Dorsolateral prefrontal cortex (tissue), 120 donors: ENCODE measurements at regions of chr3 and their contacts with region 1.

Region 1: DNA sequence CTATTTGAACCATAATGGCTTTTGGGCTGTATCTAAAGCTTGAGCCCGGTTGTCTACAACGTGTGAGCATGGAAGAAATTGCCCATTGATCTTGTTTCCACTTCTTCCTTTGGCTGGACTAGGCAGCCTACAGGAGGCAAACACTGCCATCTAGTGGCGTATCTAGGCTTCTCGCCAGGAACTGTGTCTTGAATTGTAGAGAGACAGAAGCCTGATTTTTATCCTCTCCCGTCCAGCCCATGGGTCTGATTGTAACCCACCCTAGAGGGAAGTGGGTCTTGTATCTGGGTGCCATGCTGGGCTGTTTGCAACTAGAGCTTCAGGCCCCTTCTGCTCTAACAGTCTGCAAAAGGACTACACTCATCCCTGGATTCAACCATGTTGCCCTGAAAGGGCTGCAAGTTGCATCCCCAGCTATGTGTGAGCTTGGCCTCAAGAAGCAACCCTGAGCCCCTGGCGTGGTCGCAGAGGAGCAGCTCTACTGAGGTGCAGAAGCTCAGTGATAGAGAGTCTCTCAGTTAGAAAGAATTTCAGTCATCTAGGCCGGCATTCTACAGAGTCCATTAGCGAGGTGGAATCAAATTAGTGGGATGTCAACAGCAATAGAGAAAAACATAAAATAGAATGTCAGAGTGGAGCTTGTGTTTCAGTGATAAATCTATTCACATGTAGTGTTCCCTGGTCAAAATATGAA is 170.2 kb upstream of the UMPS start:
- DNase-seq: peak; percentile 53 to 90 (median 79)
- H3K4me3 ChIP-seq: no peak overlapping the region
- H3K27ac ChIP-seq: peak overlapping the region in 51 of 59 donors; percentile 1 to 92 (median 70)
- H3K27me3 ChIP-seq: no peaks in the 10 kb centered on the region
- CTCF ChIP-seq: peak; percentile 38 to 97 (median 90)

Region 2: GRCh38 chr3:124026516-124026915 is 533.5 kb before region 1 on chr3:
- intact Hi-C with region 1: loop called in 1 of 2 experiments (anchors 10 kb)
- DNase-seq: no peak
- H3K4me3 ChIP-seq: no peak overlapping the region
- H3K27ac ChIP-seq: no peak overlapping the region
- H3K27me3 ChIP-seq: no peaks in the 10 kb centered on the region
- CTCF ChIP-seq: no peak

Region 3: DNA sequence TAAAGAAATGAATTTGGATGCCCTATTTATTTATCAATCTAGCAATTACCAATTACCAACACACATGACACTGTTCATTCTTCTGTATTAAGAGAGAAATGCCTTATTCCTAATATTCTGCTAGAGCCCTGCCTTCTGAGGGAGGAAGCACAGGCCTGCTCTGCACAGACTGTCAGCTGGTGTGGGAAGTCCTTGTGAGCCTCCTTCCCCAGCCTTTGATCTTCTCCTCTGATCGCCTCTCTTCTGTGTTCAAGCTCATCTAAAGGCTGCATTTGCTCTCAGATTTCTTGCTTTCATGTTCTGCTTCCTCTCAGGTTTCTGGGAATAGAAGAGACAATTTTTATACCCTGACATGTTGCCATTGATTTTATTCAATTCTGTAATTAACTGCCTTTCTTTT is 120.4 kb before region 1 on chr3:
- intact Hi-C with region 1: no loop called
- DNase-seq: no peak
- H3K4me3 ChIP-seq: no peak overlapping the region
- H3K27ac ChIP-seq: peak overlapping the region in 38 of 59 donors; percentile 3 to 86 (median 41)
- H3K27me3 ChIP-seq: no peaks in the 10 kb centered on the region
- CTCF ChIP-seq: no peak

Region 4: GRCh38 chr3:124529826-124530571 is 30.0 kb before region 1 on chr3:
- intact Hi-C with region 1: no loop called
- DNase-seq: peak in 4 of 10 donors; percentile 39 to 75 (median 60)
- H3K4me3 ChIP-seq: peak overlapping the region in 1 of 59 donors; percentile 8
- H3K27ac ChIP-seq: peak overlapping the region in 33 of 59 donors; percentile 1 to 77 (median 35)
- H3K27me3 ChIP-seq: no peaks in the 10 kb centered on the region
- CTCF ChIP-seq: peak in 2 of 56 donors; percentile 32 to 37

Region 5: DNA sequence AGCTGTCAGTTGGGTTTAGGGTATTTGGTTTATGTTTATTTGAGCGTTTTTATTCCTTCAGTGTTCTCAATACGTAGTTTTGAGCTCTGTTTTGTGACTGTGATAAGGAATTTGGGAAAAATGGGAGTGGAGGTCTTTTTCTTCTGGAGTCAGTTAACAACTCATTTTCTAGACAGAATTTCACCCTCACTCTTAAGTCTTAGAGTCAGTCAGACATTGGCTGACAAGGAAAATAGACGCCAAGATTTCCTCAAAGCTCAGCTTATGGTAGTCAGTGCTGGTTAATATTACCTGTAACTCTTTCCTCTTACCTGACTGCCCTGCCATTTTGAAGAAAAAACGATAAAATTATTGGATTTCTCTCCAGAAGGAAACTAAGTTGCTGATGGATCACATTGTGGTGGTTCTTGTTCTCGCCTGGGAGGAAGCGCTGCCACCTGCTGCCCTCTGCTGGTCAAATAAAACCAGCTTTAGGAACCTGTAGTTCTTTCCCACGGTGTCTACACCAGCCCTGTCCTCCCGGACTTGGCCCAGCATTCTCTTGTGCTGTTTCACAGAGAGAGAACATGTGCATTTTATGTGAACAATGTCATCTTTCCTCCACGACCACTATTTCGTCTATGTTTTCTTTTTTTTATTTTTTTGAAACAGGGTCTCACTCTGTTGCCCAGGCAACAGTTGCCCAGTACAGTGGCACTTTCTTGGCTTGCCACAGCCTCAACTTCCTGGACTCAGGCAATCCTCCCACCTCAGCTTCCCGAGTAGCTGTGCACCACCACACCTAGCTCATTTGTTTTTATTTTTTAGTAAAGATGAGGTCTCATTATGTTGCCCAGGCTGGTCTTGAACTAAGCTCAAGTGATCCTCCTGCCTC is 128.8 kb after region 1 on chr3:
- intact Hi-C with region 1: loop called (anchors 2 kb)
- DNase-seq: peak; percentile 41 to 78 (median 66)
- H3K4me3 ChIP-seq: no peak overlapping the region
- H3K27ac ChIP-seq: no peak overlapping the region
- H3K27me3 ChIP-seq: no peaks in the 10 kb centered on the region
- CTCF ChIP-seq: peak; percentile 56 to 90 (median 78)